ENCODE measurements at regions of chr18 and their contacts with region 1.

Region 1: GRCh38 chr18:10449396-10449795 is 5.0 kb upstream of the APCDD1 start:
- DNase-seq: no peak
- H3K4me3 ChIP-seq: no peak overlapping the region
- H3K27ac ChIP-seq: no peak overlapping the region
- H3K4me1 ChIP-seq: no peaks in the 10 kb centered on the region
- CTCF ChIP-seq: no peak

Region 2: GRCh38 chr18:10081492-10081891 is 367.9 kb before region 1 on chr18:
- CTCF ChIA-PET with region 1: no interaction called
- POLR2A ChIA-PET with region 1: no interaction called
- intact Hi-C with region 1: no loop called
- DNase-seq: no peak
- H3K4me3 ChIP-seq: no peak overlapping the region
- H3K27ac ChIP-seq: no peak overlapping the region
- H3K4me1 ChIP-seq: no peaks in the 10 kb centered on the region
- CTCF ChIP-seq: no peak

Region 3: DNA sequence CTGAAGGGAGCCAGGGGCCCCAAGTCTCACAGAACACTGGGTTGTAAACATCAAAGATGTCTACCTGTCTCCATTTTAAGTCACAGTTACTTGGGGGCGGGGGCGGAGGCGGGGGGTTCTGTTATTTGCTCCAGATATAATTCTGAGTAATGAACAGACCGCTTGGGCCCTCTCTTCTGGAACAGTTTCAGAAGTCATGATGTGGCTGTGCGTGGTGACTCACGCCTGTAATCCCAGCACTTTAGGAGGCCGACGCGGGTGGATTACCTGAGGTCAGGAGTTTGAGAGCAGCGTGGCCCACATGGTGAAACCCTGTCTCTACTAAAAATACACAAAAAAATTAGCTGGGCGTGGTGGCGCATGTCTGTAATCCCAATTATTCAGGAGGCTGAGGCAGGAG is 152.9 kb before region 1 on chr18:
- CTCF ChIA-PET with region 1: no interaction called
- POLR2A ChIA-PET with region 1: interaction called, 12 read pairs
- intact Hi-C with region 1: no loop called
- DNase-seq: no peak
- H3K4me3 ChIP-seq: no peak overlapping the region
- H3K27ac ChIP-seq: no peak overlapping the region
- H3K4me1 ChIP-seq: peaks cover 55% of the 10 kb centered on the region
- CTCF ChIP-seq: no peak